ENCODE measurements at regions of chr3 and their contacts with region 1.

Region 1: DNA sequence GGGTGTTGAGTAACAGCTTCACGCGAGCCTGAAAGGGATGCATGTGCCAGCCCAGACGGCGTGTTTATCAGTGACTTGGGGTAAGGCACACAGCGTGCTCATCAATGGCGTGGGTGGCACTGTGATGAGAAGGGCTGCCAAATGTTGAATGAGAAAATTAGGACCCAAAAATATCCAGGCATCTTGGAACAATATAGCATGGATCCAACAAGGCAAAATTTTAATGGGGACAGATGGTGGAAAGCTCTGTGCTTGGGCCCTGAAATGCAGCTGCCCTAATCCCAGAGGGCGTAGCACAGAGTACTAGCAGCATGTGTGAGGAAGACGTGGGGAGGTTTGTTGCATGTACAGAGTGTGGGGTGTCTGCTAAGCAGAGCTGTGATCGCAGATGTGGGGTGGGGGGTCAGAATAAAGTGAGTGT is 48.9 kb downstream of the SSUH2 start:
- DNase-seq: peak; percentile 45 to 49
- ATAC-seq: peak in 1 of 2 donors; percentile 16
- H3K4me3 ChIP-seq: no peak overlapping the region
- H3K27ac ChIP-seq: peak overlapping the region; percentile 86 to 94 (median 88)
- H3K4me1 ChIP-seq: peaks cover 85 to 91% of the 10 kb centered on the region in 2 donors
- H3K27me3 ChIP-seq: no peaks in the 10 kb centered on the region
- CTCF ChIP-seq: no peak
- POLR2A ChIP-seq: no peak

Region 2: DNA sequence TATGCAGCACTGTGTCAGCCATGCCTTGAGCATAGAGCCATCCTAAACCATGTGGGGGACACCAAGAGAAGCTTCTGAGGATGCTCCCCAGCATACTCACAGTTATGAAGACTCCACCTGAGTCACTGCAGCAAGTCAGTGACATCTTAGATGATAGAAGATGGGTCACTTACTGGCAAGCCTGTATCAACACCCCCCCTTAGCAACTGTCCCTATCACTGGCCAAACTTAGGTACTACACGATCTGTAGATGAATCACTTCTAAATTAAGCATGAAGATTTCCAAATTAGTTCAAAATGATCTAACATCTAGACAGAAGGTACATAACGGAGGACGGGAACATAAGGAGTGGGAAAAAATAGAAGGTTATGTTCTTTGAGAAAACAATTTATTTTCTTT is 107.3 kb before region 1 on chr3:
- in situ Hi-C with region 1: loop called in 1 of 4 experiments (anchors 10 kb)
- intact Hi-C with region 1: loop called (anchors 1 kb)
- DNase-seq: peak; percentile 73 to 80
- ATAC-seq: peak; percentile 82 to 92
- H3K4me3 ChIP-seq: no peak overlapping the region
- H3K27ac ChIP-seq: peak overlapping the region; percentile 82 to 96 (median 90)
- H3K4me1 ChIP-seq: peaks cover 48 to 58% of the 10 kb centered on the region in 2 donors
- H3K27me3 ChIP-seq: no peaks in the 10 kb centered on the region
- CTCF ChIP-seq: peak in 2 of 5 experiments; percentile 21
- POLR2A ChIP-seq: peak; percentile 23 to 50

Region 3: GRCh38 chr3:8509961-8510360 is 85.7 kb before region 1 on chr3:
- in situ Hi-C with region 1: loop called in 2 of 4 experiments (anchors 10 kb)
- intact Hi-C with region 1: loop called (anchors 1 kb)
- DNase-seq: peak; percentile 80 to 85
- ATAC-seq: peak; percentile 95 to 98
- H3K4me3 ChIP-seq: no peak overlapping the region
- H3K27ac ChIP-seq: peak overlapping the region; percentile 89 to 97 (median 94)
- H3K4me1 ChIP-seq: peaks cover 92 to 98% of the 10 kb centered on the region in 2 donors
- H3K27me3 ChIP-seq: no peaks in the 10 kb centered on the region
- CTCF ChIP-seq: no peak
- POLR2A ChIP-seq: peak; percentile 30 to 47

Region 4: DNA sequence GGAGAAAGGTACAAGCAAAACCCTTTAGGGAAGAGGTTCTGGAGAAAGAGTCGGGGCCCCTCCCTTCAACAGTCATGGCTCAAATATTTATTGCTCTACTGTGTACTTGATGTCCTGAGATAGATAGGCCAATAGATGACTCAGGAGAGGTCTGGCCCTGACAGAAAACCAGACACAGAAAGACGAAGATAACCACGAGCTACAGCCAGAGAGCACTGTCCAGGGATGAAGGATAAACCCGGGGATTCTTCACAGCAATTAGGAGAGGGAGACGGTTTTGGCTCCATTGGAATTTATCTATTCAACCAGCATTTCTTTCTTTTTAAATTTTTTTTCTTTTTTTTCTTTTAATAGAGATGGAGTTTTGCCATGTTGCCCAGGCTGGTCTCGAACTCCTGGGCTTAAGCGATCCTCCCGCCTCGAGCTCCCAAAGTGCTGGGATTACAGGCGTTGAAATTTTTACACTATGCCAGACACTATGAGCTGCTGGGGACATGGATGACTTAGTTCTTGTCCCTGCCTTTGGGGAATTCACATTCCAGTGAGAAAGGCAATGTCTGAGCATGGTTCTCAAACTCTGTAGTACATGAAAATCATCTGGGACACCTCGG is 1289.0 kb after region 1 on chr3:
- in situ Hi-C with region 1: no loop called
- intact Hi-C with region 1: no loop called
- DNase-seq: peak; percentile 19 to 39
- ATAC-seq: peak; percentile 77 to 95
- H3K4me3 ChIP-seq: no peak overlapping the region
- H3K27ac ChIP-seq: peak overlapping the region in 2 of 4 donors; percentile 41 to 57
- H3K4me1 ChIP-seq: no peaks in the 10 kb centered on the region
- H3K27me3 ChIP-seq: no peaks in the 10 kb centered on the region
- CTCF ChIP-seq: no peak
- POLR2A ChIP-seq: no peak